GM12878 (cell line): ENCODE measurements at regions of chr21 and their contacts with region 1.

Region 1: DNA sequence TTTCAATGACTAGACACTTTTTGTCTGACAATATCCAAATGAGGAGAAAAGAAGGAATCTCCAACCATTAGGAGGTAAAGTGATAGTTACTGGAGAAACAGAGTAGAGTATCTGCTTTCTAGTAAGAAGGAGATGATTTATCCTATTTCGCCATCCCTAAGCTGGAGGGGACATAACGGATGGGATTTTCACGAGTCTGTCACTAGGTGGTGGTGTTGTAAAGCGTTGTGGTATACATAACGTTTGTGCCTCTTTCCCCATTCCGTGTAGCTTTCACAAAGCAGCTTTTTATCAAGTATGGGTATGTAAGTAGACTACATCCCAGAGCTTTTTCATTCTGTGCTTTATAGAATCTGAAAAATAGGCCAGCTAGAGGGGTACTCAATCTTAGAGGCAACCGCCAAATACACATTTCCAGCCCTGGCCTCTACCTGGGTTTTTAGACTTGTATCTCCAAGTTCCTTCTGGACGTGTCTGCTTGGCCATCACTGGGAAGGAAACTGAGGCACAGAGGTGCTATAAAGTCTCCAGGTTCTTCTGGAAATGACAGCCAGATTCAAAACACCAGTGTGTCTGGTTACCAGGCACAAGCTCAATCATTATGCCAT is 33.3 kb upstream of the FAM3B start:
- DNase-seq: peak; percentile 61
- ATAC-seq: peak; percentile 99
- H3K4me3 ChIP-seq: no peak overlapping the region
- H3K27ac ChIP-seq: no peak overlapping the region
- H3K4me1 ChIP-seq: no peaks in the 10 kb centered on the region
- H3K27me3 ChIP-seq: peaks cover 2 to 6% of the 10 kb centered on the region in 2 experiments
- CTCF ChIP-seq: peak; percentile 72 to 94 (median 84); a peak in 5 of 6 replicates
- EP300 ChIP-seq: no peak
- POLR2A ChIP-seq: no peak
- RAD21 ChIP-seq: peak; percentile 93

Region 2: DNA sequence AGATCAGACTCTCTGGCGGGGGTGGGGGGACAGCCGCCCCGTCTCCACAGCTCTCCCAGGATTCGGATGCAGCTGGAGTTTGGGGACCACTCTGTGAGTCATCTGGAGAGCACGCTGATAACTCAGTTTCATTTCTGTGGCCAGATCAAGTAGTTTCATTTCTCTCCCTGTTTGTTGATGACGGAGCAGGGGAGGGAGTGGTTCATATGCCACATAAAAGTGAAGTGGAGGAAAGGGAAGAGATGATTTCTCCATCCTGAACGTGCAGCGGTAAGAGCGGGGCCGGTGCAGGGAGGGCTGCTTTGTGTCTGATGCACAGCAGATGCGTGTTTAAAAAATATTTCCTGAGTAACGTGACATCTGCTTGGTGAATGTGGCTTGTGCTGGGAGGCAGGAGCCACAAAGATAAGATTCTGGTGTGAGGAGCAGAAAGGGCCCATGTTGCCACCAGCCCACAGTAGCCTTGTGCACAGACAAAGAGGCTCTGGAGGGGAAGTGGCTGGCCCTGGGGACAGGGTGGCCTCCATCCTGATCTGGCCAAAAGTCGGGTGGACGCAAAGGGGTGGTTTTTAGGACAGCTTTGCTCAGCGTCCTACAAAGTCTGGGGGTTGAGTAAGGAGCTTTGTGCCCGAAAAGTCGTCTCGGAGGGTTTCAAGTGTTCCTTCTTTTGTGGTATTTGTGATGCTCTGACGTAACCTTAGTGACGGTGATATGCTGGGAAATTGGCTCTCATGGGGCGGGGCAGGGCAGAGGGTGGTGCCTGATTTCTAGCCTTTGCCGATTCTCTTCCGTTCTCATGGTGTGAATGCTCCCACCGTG is 78.7 kb after region 1 on chr21 and contains the start of gene MX2:
- CTCF ChIA-PET with region 1: interaction called, 99 read pairs
- POLR2A ChIA-PET with region 1: interaction called, 13 read pairs
- RAD21 ChIA-PET with region 1: interaction called, 97 read pairs
- SMC1A ChIA-PET with region 1: interaction called, 67 read pairs
- in situ Hi-C with region 1: no loop called
- intact Hi-C with region 1: loop called (anchors 5 kb)
- DNase-seq: peak; percentile 91
- ATAC-seq: peak; percentile 69
- H3K4me3 ChIP-seq: peak within 1 kb of the TSS; percentile 84
- H3K27ac ChIP-seq: peak within 1 kb of the TSS; percentile 89
- H3K4me1 ChIP-seq: peaks cover 30% of the 10 kb centered on the region
- H3K27me3 ChIP-seq: no peaks in the 10 kb centered on the region
- CTCF ChIP-seq: no peak
- EP300 ChIP-seq: peak; percentile 70 to 91
- POLR2A ChIP-seq: peak; percentile 71
- RAD21 ChIP-seq: 0 out of 2 replicates have a peak, but pooled peaks have one; percentile 9
- polyA plus RNA-seq, gene MX2: 10.5 to 13.9 TPM

Region 3: GRCh38 chr21:41411449-41412089 is 128.3 kb after region 1 on chr21:
- CTCF ChIA-PET with region 1: interaction called, 63 read pairs
- POLR2A ChIA-PET with region 1: no interaction called
- RAD21 ChIA-PET with region 1: interaction called, 47 read pairs
- SMC1A ChIA-PET with region 1: interaction called, 60 read pairs
- in situ Hi-C with region 1: no loop called
- intact Hi-C with region 1: no loop called
- DNase-seq: peak; percentile 40
- ATAC-seq: peak; percentile 95
- H3K4me3 ChIP-seq: no peak overlapping the region
- H3K27ac ChIP-seq: no peak overlapping the region
- H3K4me1 ChIP-seq: no peaks in the 10 kb centered on the region; the same call in 1 of the 2 replicates
- H3K27me3 ChIP-seq: no peaks in the 10 kb centered on the region
- CTCF ChIP-seq: peak; percentile 14 to 34 (median 19); a peak in 3 of 6 replicates
- EP300 ChIP-seq: no peak
- POLR2A ChIP-seq: no peak
- RAD21 ChIP-seq: no peak

Region 4: GRCh38 chr21:41431788-41432548 is 148.7 kb after region 1 on chr21:
- CTCF ChIA-PET with region 1: interaction called, 9 read pairs
- POLR2A ChIA-PET with region 1: interaction called, 3 read pairs
- RAD21 ChIA-PET with region 1: interaction called, 11 read pairs
- SMC1A ChIA-PET with region 1: interaction called, 19 read pairs
- in situ Hi-C with region 1: no loop called
- intact Hi-C with region 1: no loop called
- DNase-seq: peak; percentile 56
- ATAC-seq: peak; percentile 68
- H3K4me3 ChIP-seq: no peak overlapping the region
- H3K27ac ChIP-seq: peak overlapping the region; percentile 22; the same call in 1 of the 2 replicates
- H3K4me1 ChIP-seq: peaks cover 39% of the 10 kb centered on the region
- H3K27me3 ChIP-seq: no peaks in the 10 kb centered on the region
- CTCF ChIP-seq: no peak
- EP300 ChIP-seq: peak in 1 of 2 experiments; percentile 29; a peak in 1 of 4 replicates
- POLR2A ChIP-seq: peak; percentile 67
- RAD21 ChIP-seq: no peak

Region 5: GRCh38 chr21:41482301-41482700 is 199.0 kb after region 1 on chr21:
- CTCF ChIA-PET with region 1: interaction called, 16 read pairs
- POLR2A ChIA-PET with region 1: no interaction called
- RAD21 ChIA-PET with region 1: interaction called, 8 read pairs
- SMC1A ChIA-PET with region 1: interaction called, 4 read pairs
- in situ Hi-C with region 1: no loop called
- intact Hi-C with region 1: no loop called
- DNase-seq: no peak
- ATAC-seq: peak; percentile 37; the same call in 2 of the 3 replicates
- H3K4me3 ChIP-seq: no peak overlapping the region
- H3K27ac ChIP-seq: no peak overlapping the region
- H3K4me1 ChIP-seq: 0 out of 2 replicates have a peak, but pooled peaks cover 3% of the 10 kb centered on the region
- H3K27me3 ChIP-seq: no peaks in the 10 kb centered on the region
- CTCF ChIP-seq: no peak
- EP300 ChIP-seq: no peak
- POLR2A ChIP-seq: no peak
- RAD21 ChIP-seq: no peak